OCI-LY7 (cell line): ENCODE measurements at regions of chr1 and their contacts with region 1.

Region 1: GRCh38 chr1:77825131-77825709 is 45.8 kb downstream of the MIGA1 start:
- DNase-seq: peak; percentile 88
- H3K4me3 ChIP-seq: no peak overlapping the region
- H3K27ac ChIP-seq: peak overlapping the region; percentile 70
- H3K4me1 ChIP-seq: peaks cover 38% of the 10 kb centered on the region
- CTCF ChIP-seq: peak; percentile 84

Region 2: GRCh38 chr1:77986810-77987209 is 161.6 kb after region 1 on chr1:
- CTCF ChIA-PET with region 1: no interaction called
- POLR2A ChIA-PET with region 1: interaction called, 4 read pairs
- intact Hi-C with region 1: loop called (anchors 10 kb)
- DNase-seq: no peak
- H3K4me3 ChIP-seq: no peak overlapping the region
- H3K27ac ChIP-seq: no peak overlapping the region
- H3K4me1 ChIP-seq: peaks cover 1% of the 10 kb centered on the region
- CTCF ChIP-seq: no peak